Sciatic nerve (tissue), 2 donors: ENCODE measurements at regions of chr4 and their contacts with region 1.

Region 1: GRCh38 chr4:158172261-158173258 is at the start of gene GASK1B:
- DNase-seq: peak; percentile 63
- ATAC-seq: peak; percentile 61
- total RNA-seq, gene GASK1B: 100 TPM

Region 2: DNA sequence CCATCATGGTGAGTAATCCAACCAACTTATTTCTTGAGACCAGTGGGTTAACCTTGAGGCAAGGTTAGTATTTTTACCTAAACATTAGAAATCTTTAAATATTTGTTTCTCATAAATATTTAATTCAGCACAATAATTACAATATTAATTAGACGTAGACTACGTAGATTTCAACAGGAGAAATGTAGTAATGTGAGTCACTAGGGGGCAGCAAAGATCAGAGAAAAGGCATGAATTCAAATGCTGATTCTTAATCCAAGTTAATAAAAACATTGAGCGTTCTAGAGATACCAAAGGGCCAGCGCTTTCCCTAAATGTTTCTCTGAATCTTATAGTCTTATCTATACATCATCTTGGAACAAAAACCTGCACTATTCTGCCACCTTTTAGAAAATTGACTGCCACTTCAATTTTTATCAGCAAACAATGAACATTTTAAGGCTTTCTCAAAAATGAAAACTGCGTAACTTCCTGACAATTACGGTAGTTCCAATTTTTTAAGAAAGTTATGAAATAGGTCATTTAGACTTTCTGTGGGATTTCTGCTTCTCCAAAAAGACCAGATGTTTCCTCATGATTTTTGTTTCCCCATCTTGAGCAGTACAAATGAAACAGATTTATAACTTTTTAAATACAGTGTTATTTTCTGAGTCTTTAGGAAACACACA is 180.4 kb before region 1 on chr4:
- intact Hi-C with region 1: loop called (anchors 5 kb)
- DNase-seq: no peak
- ATAC-seq: peak; percentile 93